ENCODE measurements at regions of chr2 and their contacts with region 1.

Region 1: GRCh38 chr2:9601397-9601796 is 29.4 kb downstream of the YWHAQ start:
- DNase-seq: no peak
- H3K4me3 ChIP-seq: no peak overlapping the region
- H3K27ac ChIP-seq: no peak overlapping the region
- H3K4me1 ChIP-seq: peaks cover 0 to 2% (median under 1%) of the 10 kb centered on the region in 4 experiments
- H3K27me3 ChIP-seq: no peaks in the 10 kb centered on the region

Region 2: DNA sequence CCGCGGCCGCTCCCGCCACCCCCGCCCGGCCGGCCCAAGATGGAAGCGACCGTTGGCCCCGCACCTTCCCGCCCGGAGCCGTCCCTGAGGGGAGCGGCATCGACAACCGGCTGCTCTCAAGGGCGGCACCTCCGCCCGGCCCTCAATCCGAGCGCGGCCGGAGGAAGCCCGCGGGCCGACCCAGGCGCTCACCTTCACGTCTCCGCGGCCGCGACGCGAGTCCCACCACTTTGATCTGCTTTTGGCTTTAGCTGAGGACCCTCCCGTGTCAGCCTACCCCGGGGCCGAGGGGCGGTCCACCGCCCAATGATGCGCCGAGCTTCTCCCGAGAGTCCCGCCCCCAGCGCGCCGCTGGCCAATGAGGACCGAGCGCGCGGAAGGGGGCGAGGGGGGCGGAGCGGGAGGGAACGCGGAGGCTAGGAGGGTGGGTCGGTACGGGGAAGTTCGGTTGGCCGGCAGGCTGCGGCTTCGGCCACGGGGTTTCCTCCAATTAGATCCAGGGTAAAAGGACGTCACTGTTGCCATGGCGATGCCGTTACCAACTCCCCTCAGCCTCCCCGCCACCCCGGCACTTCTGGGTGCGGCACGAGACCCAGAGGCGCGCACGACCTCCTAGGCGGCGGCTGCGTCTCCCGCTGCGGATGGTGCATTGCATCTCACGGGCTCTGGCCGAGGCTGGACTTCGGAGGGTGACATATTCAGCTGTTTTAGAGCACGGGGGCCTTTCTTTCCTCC is 29.5 kb after region 1 on chr2 and contains the start of gene YWHAQ:
- CTCF ChIA-PET with region 1: no interaction called
- POLR2A ChIA-PET with region 1: interaction called, 10 read pairs
- DNase-seq: peak; percentile 99
- H3K4me3 ChIP-seq: peak within 1 kb of the TSS; percentile 89 to 98 (median 96)
- H3K27ac ChIP-seq: peak within 1 kb of the TSS; percentile 87 to 89
- H3K4me1 ChIP-seq: peaks cover 14 to 36% (median 26%) of the 10 kb centered on the region in 4 experiments
- H3K27me3 ChIP-seq: no peaks in the 10 kb centered on the region